Heart left ventricle (tissue), 16 donors: ENCODE measurements at regions of chr12 and their contacts with region 1.

Region 1: DNA sequence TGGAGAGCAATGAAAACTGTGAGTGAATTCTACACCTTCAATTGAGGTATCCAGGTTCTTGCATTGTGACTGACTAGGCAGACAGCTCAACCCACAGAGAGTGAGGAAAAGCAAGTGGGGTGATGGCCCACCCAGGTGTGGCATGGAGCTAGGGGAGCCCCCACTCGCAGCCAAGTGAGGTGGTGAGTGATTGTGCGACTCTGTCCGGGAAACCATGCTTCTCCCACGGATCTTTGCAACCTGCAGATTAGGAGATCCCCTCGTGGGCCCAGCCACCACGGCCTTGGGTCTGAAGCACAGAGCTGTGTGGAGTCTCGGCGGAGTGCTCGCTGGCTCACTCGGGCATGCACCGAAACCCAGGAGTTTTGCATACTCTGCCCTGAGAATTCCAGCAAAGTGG is 120.1 kb downstream of the ALG10 start:
- DNase-seq: no peak
- ATAC-seq: no peak
- H3K4me3 ChIP-seq: no peak overlapping the region
- H3K27ac ChIP-seq: no peak overlapping the region
- H3K4me1 ChIP-seq: no peaks in the 10 kb centered on the region
- H3K27me3 ChIP-seq: no peaks in the 10 kb centered on the region
- CTCF ChIP-seq: no peak
- POLR2A ChIP-seq: no peak

Region 2: GRCh38 chr12:33988913-33989312 is 153.5 kb before region 1 on chr12:
- intact Hi-C with region 1: no loop called
- DNase-seq: no peak
- ATAC-seq: peak in 1 of 4 donors; percentile 75
- H3K4me3 ChIP-seq: no peak overlapping the region
- H3K27ac ChIP-seq: peak overlapping the region in 3 of 12 donors; percentile 11 to 31 (median 12)
- H3K4me1 ChIP-seq: peaks cover 0 to 6% (median 0%) of the 10 kb centered on the region in 12 donors
- H3K27me3 ChIP-seq: no peaks in the 10 kb centered on the region
- CTCF ChIP-seq: no peak
- POLR2A ChIP-seq: no peak

Region 3: GRCh38 chr12:34300376-34301250 is 158.2 kb after region 1 on chr12:
- intact Hi-C with region 1: loop called in 1 of 10 experiments (anchors 5 kb)
- DNase-seq: peak in 2 of 5 donors; percentile 5 to 21
- ATAC-seq: no peak
- H3K4me3 ChIP-seq: no peak overlapping the region
- H3K27ac ChIP-seq: no peak overlapping the region
- H3K4me1 ChIP-seq: no peaks in the 10 kb centered on the region
- H3K27me3 ChIP-seq: peaks cover 0 to 27% (median 0%) of the 10 kb centered on the region in 9 donors
- CTCF ChIP-seq: no peak
- POLR2A ChIP-seq: no peak